GM10248 (cell line): ENCODE measurements at regions of chr4 and their contacts with region 1.

Region 1: GRCh38 chr4:163681208-163681821 is 186.8 kb downstream of the TMA16 start:
- DNase-seq: peak; percentile 56
- CTCF ChIP-seq: peak; percentile 59

Region 2: GRCh38 chr4:163663454-163664225 is 17.7 kb before region 1 on chr4:
- CTCF ChIA-PET with region 1: interaction called, 22 read pairs
- POLR2A ChIA-PET with region 1: no interaction called
- DNase-seq: peak; percentile 26
- CTCF ChIP-seq: no peak

Region 3: GRCh38 chr4:163693776-163694175 is 12.5 kb after region 1 on chr4:
- CTCF ChIA-PET with region 1: interaction called, 32 read pairs
- POLR2A ChIA-PET with region 1: no interaction called
- DNase-seq: no peak
- CTCF ChIP-seq: no peak

Region 4: DNA sequence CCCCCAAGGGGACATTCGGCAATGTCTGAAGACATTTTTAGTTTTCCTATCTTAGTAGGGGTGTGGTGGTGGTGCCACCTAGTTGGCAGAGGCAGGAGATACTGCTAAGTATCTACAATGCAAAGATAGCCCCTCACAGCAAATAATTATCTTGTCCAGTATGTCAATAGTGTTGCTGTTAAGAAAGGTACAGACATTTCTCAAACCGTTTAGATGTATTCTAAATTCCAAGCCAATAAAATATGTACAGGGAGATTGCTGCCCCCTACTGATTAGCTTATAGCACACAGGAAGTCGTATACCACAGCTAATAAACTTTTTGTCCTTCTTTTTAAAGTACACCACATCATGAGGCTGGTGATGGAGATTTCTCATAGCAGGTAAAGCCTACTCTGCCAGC is 73.7 kb after region 1 on chr4:
- CTCF ChIA-PET with region 1: interaction called, 17 read pairs
- POLR2A ChIA-PET with region 1: no interaction called
- DNase-seq: peak; percentile 15
- CTCF ChIP-seq: peak; percentile 33